Endothelial cell of umbilical vein (primary cell): ENCODE measurements at regions of chr6 and their contacts with region 1.

Region 1: GRCh38 chr6:32369675-32370074 is 2.0 kb downstream of the TSBP1 start:
- DNase-seq: peak; percentile 93
- H3K4me3 ChIP-seq: no peak overlapping the region
- H3K27ac ChIP-seq: peak overlapping the region; percentile 96
- H3K4me1 ChIP-seq: peaks cover 25% of the 10 kb centered on the region
- H3K27me3 ChIP-seq: peaks cover 0 to 5% of the 10 kb centered on the region in 2 experiments
- CTCF ChIP-seq: no peak
- POLR2A ChIP-seq: no peak

Region 2: GRCh38 chr6:32393665-32394420 is 24.2 kb after region 1 on chr6:
- CTCF ChIA-PET with region 1: interaction called, 5 read pairs
- POLR2A ChIA-PET with region 1: no interaction called
- dilution Hi-C with region 1: no loop called
- intact Hi-C with region 1: loop called (anchors 1 kb)
- DNase-seq: peak; percentile 99
- H3K4me3 ChIP-seq: no peak overlapping the region
- H3K27ac ChIP-seq: peak overlapping the region; percentile 86
- H3K4me1 ChIP-seq: peaks cover 13% of the 10 kb centered on the region
- H3K27me3 ChIP-seq: no peaks in the 10 kb centered on the region
- CTCF ChIP-seq: no peak
- POLR2A ChIP-seq: no peak